ENCODE measurements at regions of chr6 and their contacts with region 1.

Region 1: GRCh38 chr6:122530440-122531046 is 58.9 kb upstream of the SERINC1 start:
- DNase-seq: peak in 2 of 5 donors; percentile 13 to 26
- ATAC-seq: peak in 3 of 4 donors; percentile 80 to 86 (median 82)
- H3K4me3 ChIP-seq: no peak overlapping the region
- H3K27ac ChIP-seq: no peak overlapping the region
- H3K4me1 ChIP-seq: no peaks in the 10 kb centered on the region
- H3K27me3 ChIP-seq: peaks cover 0 to 27% (median 0%) of the 10 kb centered on the region in 9 donors
- CTCF ChIP-seq: peak; percentile 79 to 94 (median 88)
- POLR2A ChIP-seq: no peak

Region 2: DNA sequence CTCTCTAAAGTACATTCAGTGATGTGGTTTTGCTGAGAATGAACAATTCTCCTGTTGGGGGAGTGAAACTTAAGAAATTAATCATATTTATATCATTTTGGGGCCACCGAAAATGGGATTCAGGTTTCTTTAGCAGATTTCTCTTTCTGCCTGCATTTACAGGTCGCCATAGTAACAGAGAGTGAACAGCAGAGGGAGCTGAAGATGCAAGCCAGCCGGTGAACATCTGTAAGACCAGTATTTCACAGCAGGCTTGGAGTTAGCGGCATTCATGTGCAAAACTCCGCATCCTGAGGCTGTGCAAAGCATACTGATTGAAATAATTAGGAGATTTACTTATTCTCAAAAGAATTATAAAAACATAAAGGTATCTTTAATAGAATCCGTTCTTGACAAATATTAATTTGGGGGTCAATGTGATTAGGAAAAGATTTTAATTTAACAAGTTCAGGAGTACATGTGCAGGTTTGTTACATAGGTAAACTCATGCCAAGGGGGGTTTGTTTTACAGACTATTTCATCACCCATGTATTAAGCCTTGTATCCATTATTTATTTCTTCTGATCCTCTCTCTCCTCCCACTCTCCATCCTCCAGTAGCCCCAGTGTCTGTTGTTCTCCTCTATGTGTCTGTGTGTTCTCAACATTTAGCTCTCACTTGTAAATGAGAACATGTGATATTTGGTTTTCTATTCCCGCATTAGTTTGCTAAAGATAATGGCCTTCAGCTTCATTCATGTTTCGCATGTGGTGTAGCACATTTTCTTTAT is 148.9 kb before region 1 on chr6:
- intact Hi-C with region 1: loop called (anchors 1 to 5 kb)
- DNase-seq: peak in 4 of 5 donors; percentile 34 to 41 (median 38)
- ATAC-seq: peak in 3 of 4 donors; percentile 73 to 81 (median 79)
- H3K4me3 ChIP-seq: no peak overlapping the region
- H3K27ac ChIP-seq: no peak overlapping the region
- H3K4me1 ChIP-seq: no peaks in the 10 kb centered on the region
- H3K27me3 ChIP-seq: peaks cover 0 to 4% (median 0%) of the 10 kb centered on the region in 9 donors
- CTCF ChIP-seq: peak; percentile 63 to 84 (median 69)
- POLR2A ChIP-seq: no peak

Region 3: DNA sequence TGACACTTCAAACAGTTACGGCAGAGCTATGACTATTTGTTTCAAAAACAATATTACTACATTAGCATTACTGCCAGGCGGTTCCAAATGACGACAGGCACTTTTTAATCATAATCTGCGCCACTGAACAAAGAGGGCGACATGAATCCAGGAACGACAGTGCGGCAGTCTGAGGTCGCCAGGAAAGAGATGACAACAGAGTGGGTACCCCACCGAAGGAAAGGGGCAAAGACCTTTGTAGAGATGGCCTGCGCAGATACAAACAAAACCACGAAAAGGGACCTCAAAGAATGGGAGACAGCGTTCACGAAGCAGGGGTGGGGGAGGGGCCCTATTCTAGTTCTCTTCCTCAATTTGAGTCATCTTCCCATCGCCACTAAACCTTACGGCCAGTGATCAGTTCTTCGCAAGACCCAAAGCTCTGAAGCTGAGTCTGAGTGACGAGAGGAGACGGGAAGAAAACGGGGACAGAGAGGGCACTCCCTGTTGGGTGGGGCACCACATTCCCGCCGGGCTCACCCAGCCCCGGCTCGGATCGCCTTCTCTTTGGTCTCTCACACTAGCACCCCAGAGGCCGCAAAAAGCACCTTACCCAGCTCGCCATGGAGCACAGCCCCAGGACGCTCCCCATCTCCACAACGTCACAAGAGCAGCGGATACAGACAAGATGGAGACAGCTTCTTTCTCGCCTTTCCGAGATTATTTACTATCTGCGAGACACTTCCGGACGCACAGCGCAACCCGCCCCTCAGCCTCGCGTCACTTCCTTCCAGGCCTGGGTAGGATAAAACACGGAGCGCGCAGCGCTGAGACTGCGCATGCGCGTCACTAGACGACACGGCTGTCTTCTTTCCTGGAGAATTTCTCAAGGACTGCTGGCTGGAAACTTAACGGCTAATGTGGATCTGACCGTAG is 59.2 kb before region 1 on chr6 and contains the start of gene SERINC1:
- intact Hi-C with region 1: loop called in 6 of 10 experiments (anchors 5 kb)
- DNase-seq: peak; percentile 95 to 97 (median 96)
- ATAC-seq: peak; percentile 99 to 100 (median 99)
- H3K4me3 ChIP-seq: peak within 1 kb of the TSS; percentile 66 to 97 (median 89)
- H3K27ac ChIP-seq: peak within 1 kb of the TSS; percentile 77 to 98 (median 95)
- H3K4me1 ChIP-seq: peaks cover 0 to 50% (median 22%) of the 10 kb centered on the region in 12 donors
- H3K27me3 ChIP-seq: no peaks in the 10 kb centered on the region
- CTCF ChIP-seq: no peak
- POLR2A ChIP-seq: peak; percentile 65 to 74
- total RNA-seq, gene SERINC1: 158 to 208 (median 174) TPM

Region 4: DNA sequence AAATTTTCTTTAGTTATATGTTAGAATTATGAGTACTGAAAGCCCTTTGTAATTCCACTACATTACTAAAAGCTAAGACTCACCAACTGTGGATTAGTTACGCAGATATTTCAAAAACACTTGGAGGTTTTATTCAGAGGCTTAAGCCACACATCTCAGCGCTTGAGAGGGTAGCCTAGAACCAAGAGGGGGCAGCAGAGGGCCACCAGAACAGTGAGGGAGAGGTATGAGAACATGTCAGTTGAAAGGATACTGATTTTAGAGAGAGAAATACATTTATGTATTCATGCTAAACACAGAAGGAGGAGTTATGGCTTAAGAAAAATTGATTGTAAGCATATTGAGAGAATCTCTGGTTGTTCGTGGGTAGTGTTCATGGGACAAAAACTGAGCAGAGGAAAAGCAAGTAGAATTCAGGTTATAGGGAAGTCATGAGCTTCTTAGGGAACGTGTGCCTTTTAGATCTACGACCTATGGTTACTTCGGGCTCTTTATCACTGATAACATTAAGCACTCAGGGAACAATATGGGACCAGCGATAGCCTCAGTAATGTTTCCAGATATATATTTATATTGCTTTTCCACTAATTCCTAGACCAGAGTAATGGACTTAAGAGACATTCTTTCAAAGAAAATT is 38.5 kb before region 1 on chr6:
- intact Hi-C with region 1: loop called (anchors 1 to 5 kb)
- DNase-seq: peak; percentile 49 to 64 (median 58)
- ATAC-seq: peak in 3 of 4 donors; percentile 89 to 96 (median 94)
- H3K4me3 ChIP-seq: peak overlapping the region in 1 of 12 donors; percentile 25
- H3K27ac ChIP-seq: no peak overlapping the region
- H3K4me1 ChIP-seq: peaks cover 0 to 3% (median 0%) of the 10 kb centered on the region in 12 donors
- H3K27me3 ChIP-seq: peaks cover 0 to 3% (median 0%) of the 10 kb centered on the region in 9 donors
- CTCF ChIP-seq: peak; percentile 71 to 95 (median 86)
- POLR2A ChIP-seq: no peak